ENCODE measurements at regions of chr14 and their contacts with region 1.

Region 1: GRCh38 chr14:62126879-62127478 is 364.8 kb downstream of the SNAPC1 start:
- DNase-seq: no peak
- H3K4me3 Mint-ChIP-seq: no peak overlapping the region
- H3K27ac Mint-ChIP-seq: no peak overlapping the region
- H3K4me1 Mint-ChIP-seq: no peaks in the 10 kb centered on the region
- H3K27me3 Mint-ChIP-seq: peaks cover 44% of the 10 kb centered on the region

Region 2: GRCh38 chr14:61461808-61462275 is 665.1 kb before region 1 on chr14:
- intact Hi-C with region 1: loop called (anchors 2 kb)
- DNase-seq: no peak
- H3K4me3 Mint-ChIP-seq: peak overlapping the region; percentile 15
- H3K27ac Mint-ChIP-seq: peak overlapping the region; percentile 65
- H3K4me1 Mint-ChIP-seq: peaks cover 51% of the 10 kb centered on the region
- H3K27me3 Mint-ChIP-seq: no peaks in the 10 kb centered on the region

Region 3: GRCh38 chr14:61837336-61838229 is 289.4 kb before region 1 on chr14:
- intact Hi-C with region 1: loop called (anchors 1 kb)
- DNase-seq: peak; percentile 66
- H3K4me3 Mint-ChIP-seq: no peak overlapping the region
- H3K27ac Mint-ChIP-seq: no peak overlapping the region
- H3K4me1 Mint-ChIP-seq: no peaks in the 10 kb centered on the region
- H3K27me3 Mint-ChIP-seq: peaks cover 9% of the 10 kb centered on the region

Region 4: DNA sequence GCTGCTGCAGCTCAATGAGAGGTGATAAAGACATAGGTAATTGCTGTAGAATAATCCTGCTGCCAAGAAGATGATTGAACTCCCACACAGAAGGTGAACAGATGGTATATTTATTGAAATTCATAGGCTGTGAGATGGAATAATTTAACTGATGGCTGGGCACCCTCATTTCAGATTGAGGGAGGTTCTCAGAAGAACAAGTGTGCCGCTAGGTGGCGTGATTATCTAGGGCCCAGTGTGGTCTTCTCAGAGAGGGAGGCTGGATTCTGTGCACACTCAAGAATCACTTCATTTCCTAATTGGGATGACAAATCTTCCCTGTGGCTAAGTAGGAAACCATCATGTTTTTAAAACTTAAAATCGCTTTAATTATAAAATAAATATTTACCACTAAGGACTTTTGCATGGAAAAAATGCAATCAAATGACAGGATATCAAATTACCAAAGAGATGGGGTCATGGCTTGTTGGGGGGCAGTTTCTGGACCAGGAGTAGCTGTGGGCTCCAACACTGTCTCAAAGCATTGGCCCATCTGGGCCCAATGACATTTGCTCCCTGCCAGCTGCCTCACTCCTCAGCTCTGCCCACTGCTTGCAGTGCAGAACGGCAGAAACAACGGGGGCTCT is 232.4 kb before region 1 on chr14:
- intact Hi-C with region 1: loop called (anchors 1 kb)
- DNase-seq: peak; percentile 27
- H3K4me3 Mint-ChIP-seq: no peak overlapping the region
- H3K27ac Mint-ChIP-seq: no peak overlapping the region
- H3K4me1 Mint-ChIP-seq: peaks cover 12% of the 10 kb centered on the region
- H3K27me3 Mint-ChIP-seq: peaks cover 14% of the 10 kb centered on the region